ENCODE measurements at regions of chr3 and their contacts with region 1.

Region 1: DNA sequence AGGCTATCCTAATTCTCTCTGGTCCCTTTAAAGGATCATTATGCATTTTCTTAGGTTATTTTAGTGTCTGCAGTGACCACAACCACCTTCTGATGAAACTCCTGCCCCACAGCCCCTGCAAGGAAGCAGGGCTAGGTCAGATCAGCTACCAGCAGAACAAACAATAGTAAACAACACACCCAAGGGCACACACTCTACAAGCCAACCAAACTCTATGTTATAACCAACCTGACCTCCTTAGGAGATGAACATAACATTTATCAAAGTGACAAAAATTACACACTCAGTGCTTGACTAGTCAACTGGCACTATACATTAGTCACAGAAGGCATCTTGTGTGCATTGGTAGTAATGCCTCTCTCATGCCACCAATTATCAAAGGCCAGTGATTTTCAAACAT is 17.3 kb downstream of the DENND6A start:
- DNase-seq: no peak
- ATAC-seq: peak; percentile 25
- H3K4me3 Mint-ChIP-seq: no peak overlapping the region
- H3K27ac Mint-ChIP-seq: peak overlapping the region; percentile 82
- H3K4me1 Mint-ChIP-seq: peaks cover 49% of the 10 kb centered on the region
- H3K27me3 Mint-ChIP-seq: no peaks in the 10 kb centered on the region
- CTCF ChIP-seq: no peak

Region 2: DNA sequence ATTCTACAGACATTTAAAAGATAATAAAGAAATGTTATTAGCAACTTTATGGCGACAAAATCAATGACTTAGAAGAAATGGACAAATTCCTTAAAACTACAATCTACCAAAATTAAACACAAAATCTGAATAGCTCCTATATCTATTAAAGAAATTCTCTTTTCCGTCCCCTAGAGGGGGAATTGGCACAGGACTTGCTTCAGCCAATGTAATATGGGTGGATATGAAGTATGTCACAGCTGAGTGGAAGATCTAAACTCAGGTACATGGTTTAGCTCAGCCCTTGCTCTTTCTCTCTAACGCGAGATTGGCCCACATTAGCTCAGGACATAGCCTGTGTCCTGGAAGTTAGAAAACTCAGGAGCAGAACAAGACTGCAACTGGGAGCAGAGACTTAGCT is 210.7 kb before region 1 on chr3:
- CTCF ChIA-PET with region 1: no interaction called
- POLR2A ChIA-PET with region 1: interaction called, 15 read pairs
- intact Hi-C with region 1: no loop called
- DNase-seq: no peak
- ATAC-seq: no peak
- H3K4me3 Mint-ChIP-seq: no peak overlapping the region
- H3K27ac Mint-ChIP-seq: no peak overlapping the region
- H3K4me1 Mint-ChIP-seq: no peaks in the 10 kb centered on the region
- H3K27me3 Mint-ChIP-seq: peaks cover 11% of the 10 kb centered on the region
- CTCF ChIP-seq: no peak

Region 3: DNA sequence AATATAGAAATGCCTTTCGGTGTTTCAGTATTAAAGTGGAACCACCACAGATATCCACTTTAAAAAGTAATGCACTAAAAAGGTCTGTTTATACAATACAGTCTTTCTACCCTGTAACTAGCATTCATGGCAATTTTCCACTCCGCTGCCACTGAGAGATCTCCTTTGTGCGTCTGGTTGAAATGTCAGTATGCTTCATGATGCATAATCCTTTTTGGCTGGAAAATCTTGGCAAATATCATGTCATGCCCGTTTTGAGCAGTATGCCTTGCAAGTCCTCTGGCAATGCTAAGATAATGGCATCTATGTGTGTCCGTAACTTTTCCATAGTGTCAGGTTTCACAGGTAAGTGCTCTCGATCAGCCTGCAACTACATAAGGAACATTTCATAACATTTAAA is 47.6 kb before region 1 on chr3:
- CTCF ChIA-PET with region 1: no interaction called
- POLR2A ChIA-PET with region 1: no interaction called
- intact Hi-C with region 1: no loop called
- DNase-seq: no peak
- ATAC-seq: no peak
- H3K4me3 Mint-ChIP-seq: no peak overlapping the region
- H3K27ac Mint-ChIP-seq: no peak overlapping the region
- H3K4me1 Mint-ChIP-seq: no peaks in the 10 kb centered on the region
- H3K27me3 Mint-ChIP-seq: no peaks in the 10 kb centered on the region
- CTCF ChIP-seq: no peak

Region 4: GRCh38 chr3:57692259-57693147 is 17.0 kb after region 1 on chr3 and contains the start of gene DENND6A:
- CTCF ChIA-PET with region 1: no interaction called
- POLR2A ChIA-PET with region 1: interaction called, 24 read pairs
- intact Hi-C with region 1: loop called (anchors 1 kb)
- DNase-seq: peak; percentile 95
- ATAC-seq: peak; percentile 86
- H3K4me3 Mint-ChIP-seq: peak within 1 kb of the TSS; percentile 89
- H3K27ac Mint-ChIP-seq: peak within 1 kb of the TSS; percentile 85
- H3K4me1 Mint-ChIP-seq: peaks cover 35% of the 10 kb centered on the region
- H3K27me3 Mint-ChIP-seq: no peaks in the 10 kb centered on the region
- CTCF ChIP-seq: no peak
- total RNA-seq, gene DENND6A: 21.5 and 25.7 TPM in 2 replicates

Region 5: DNA sequence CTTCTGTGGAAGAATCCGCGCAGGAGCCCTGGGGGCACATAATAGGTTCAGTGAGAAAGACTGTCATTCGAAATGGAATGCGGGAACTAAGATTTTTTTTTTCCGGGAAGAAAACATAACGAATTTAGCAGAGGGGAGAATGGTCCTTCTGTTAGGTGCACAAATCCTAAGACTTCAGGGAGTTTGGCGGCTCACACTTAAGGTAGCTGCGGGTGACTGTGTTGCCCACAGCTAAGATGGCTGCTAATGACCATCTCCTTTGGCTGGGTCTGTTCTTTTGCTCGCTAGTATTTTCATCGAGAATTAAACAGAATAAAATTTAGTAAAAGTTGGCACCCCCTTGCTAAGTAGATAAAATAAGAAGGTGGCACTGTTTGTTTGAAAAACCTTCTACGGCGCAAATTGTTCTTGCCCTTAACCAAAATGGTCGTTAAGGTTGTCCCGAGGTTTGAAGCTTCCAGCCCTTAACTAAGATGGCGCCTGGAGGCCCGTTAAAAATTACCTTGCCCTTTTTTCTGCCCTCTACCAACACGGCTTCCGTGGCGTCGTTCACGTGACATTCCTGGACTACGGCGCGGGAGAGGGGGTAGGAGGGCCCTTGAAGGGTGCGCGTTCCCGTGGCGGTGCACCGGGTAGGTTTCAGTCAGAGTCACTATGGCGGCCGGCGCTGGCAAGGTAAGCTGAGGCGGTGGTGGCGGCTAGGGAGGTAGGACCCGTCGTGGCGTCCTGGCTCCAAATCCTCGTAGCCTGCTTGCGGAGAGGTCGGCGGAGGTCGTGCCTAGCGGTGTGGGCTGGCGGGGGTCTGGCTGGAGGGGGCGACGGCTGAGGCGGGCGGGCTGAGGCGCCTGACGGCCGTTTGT is 80.4 kb after region 1 on chr3 and contains the start of gene SLMAP:
- CTCF ChIA-PET with region 1: no interaction called
- POLR2A ChIA-PET with region 1: interaction called, 13 read pairs
- intact Hi-C with region 1: loop called (anchors 1 kb)
- DNase-seq: peak; percentile 87
- ATAC-seq: peak; percentile 94
- H3K4me3 Mint-ChIP-seq: peak within 1 kb of the TSS; percentile 95
- H3K27ac Mint-ChIP-seq: peak within 1 kb of the TSS; percentile 94
- H3K4me1 Mint-ChIP-seq: peaks cover 39% of the 10 kb centered on the region
- H3K27me3 Mint-ChIP-seq: no peaks in the 10 kb centered on the region
- CTCF ChIP-seq: no peak
- total RNA-seq, gene SLMAP: 45.4 and 57.1 TPM in 2 replicates

Measured in activated B cell treated with CpG ODN at 0.5 μM for 24 hours (primary cell).